ENCODE measurements at regions of chr13 and their contacts with region 1.

Region 1: GRCh38 chr13:91313103-91313502 is 34.4 kb upstream of the MIR17HG start:
- DNase-seq: peak; percentile 77
- H3K4me3 Mint-ChIP-seq: peak overlapping the region; percentile 52
- H3K27ac Mint-ChIP-seq: no peak overlapping the region
- H3K4me1 Mint-ChIP-seq: peaks cover 22% of the 10 kb centered on the region
- H3K27me3 Mint-ChIP-seq: peaks cover 14% of the 10 kb centered on the region

Region 2: DNA sequence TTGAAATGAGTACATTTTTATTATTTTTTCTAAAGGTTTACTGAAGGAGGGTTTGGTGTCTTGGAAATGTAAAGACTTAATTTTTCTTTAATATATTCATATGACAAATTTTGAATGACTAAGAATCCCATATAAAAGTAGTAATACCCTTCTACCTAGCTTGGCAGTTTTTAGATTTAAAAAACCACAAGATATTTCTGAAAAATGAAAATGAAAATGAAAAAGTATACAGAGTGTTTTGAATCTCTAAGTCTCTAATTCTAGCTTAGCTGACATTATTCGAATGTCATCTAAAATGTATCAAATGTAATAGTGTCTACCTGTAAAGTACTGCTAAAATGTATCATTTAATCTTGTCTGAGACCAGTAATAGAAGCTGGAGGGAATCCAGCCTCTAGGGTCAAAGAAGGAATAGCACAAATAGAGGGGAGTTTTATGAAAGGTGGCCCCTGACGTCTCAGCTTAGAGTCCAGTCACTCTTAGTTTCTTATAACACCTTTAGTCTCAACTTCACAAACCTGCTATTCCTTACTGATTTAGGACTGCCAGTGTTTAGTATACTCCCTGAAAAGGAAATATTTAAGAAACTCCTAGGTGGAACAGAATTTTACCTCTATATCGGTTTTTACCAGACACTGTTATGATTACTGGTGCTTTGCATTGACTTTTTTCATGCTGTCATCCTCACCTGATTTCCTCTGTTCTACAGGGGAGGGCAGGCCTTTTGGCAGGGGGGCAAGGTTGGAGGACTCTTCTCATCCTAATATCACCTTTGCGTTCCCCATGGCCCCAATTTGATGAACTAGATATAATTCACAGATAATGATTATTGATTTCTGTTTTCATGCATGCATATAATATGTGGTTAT is 18.2 kb after region 1 on chr13:
- intact Hi-C with region 1: loop called (anchors 2 kb)
- DNase-seq: no peak
- H3K4me3 Mint-ChIP-seq: peak overlapping the region; percentile 55
- H3K27ac Mint-ChIP-seq: peak overlapping the region; percentile 62
- H3K4me1 Mint-ChIP-seq: peaks cover 19% of the 10 kb centered on the region
- H3K27me3 Mint-ChIP-seq: peaks cover 5% of the 10 kb centered on the region

Measured in activated CD4-positive, alpha-beta T cell treated with anti-CD3 and anti-CD28 coated beads, Interleukin-2, amount 10 ng/mL, durations not matched to agents 24 days and 14 days (primary cell).